ENCODE measurements at regions of chr10 and their contacts with region 1.

Region 1: GRCh38 chr10:86688398-86688921 is 20.1 kb downstream of the LDB3 start:
- DNase-seq: peak; percentile 54
- ATAC-seq: peak; percentile 89
- H3K4me3 ChIP-seq: no peak overlapping the region
- H3K27ac ChIP-seq: no peak overlapping the region
- H3K4me1 ChIP-seq: no peaks in the 10 kb centered on the region
- H3K27me3 ChIP-seq: no peaks in the 10 kb centered on the region
- CTCF ChIP-seq: peak; percentile 80 to 86 (median 81); a peak in 5 of 6 replicates
- POLR2A ChIP-seq: no peak
- RAD21 ChIP-seq: peak; percentile 91

Region 2: GRCh38 chr10:86399879-86400704 is 288.4 kb before region 1 on chr10:
- CTCF ChIA-PET with region 1: interaction called, 3 read pairs
- POLR2A ChIA-PET with region 1: no interaction called
- RAD21 ChIA-PET with region 1: no interaction called
- intact Hi-C with region 1: loop called (anchors 5 kb)
- DNase-seq: peak; percentile 91
- ATAC-seq: peak; percentile 90
- H3K4me3 ChIP-seq: peak overlapping the region; percentile 64 to 73
- H3K27ac ChIP-seq: peak overlapping the region; percentile 85
- H3K4me1 ChIP-seq: peaks cover 15 to 31% of the 10 kb centered on the region in 2 experiments
- H3K27me3 ChIP-seq: no peaks in the 10 kb centered on the region
- CTCF ChIP-seq: peak; percentile 90 to 91 (median 91)
- POLR2A ChIP-seq: peak; percentile 46
- RAD21 ChIP-seq: peak; percentile 97

Region 3: DNA sequence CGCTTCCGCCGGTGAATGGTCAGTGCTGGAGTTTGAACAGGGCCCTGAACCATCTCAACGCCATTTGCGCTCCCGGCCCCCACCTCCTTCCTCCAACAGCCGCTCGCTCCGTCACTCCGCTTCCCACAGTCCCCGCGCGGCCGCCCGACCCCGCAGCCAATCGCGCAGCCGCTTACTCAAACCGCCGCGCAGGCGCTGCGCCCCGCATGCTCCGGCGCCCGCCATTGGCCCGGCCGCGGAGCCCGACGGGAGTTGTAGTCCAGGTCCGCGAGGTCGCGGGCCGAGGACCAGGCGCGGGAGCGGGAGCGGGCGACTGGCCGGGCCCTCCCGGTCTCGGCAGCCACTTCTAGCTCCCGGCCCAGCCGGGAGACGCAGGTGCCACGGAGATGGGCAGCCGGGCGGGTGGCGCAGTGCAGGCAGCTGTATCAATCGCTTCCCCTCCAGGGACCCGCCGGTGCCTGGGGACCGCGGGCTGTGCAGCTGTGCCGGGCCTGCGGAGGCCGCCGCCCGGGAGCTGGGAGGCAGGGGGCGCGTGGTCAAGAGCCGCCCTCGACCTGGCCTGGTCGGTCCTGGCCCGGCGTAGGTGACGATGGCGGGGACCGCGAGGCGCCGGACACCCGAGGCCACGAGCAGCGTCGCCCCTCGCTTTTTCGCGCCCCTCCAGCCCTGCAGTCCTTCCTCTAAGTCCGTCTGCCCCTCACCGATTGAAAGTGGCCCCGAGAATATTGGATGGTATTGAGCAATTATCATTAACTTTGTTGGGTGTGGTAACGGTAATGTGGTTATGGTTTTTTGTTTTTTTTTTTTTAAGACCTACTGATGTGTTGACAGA is 166.6 kb before region 1 on chr10 and contains the start of gene WAPL:
- CTCF ChIA-PET with region 1: interaction called, 7 read pairs
- POLR2A ChIA-PET with region 1: no interaction called
- RAD21 ChIA-PET with region 1: no interaction called
- intact Hi-C with region 1: loop called (anchors 5 kb)
- DNase-seq: peak; percentile 81
- ATAC-seq: peak; percentile 93
- H3K4me3 ChIP-seq: peak within 1 kb of the TSS; percentile 82 to 84
- H3K27ac ChIP-seq: peak within 1 kb of the TSS; percentile 85
- H3K4me1 ChIP-seq: peaks cover 12 to 22% of the 10 kb centered on the region in 2 experiments; a peak in 3 of 4 replicates
- H3K27me3 ChIP-seq: no peaks in the 10 kb centered on the region
- CTCF ChIP-seq: no peak
- POLR2A ChIP-seq: peak; percentile 39
- RAD21 ChIP-seq: no peak
- total RNA-seq, gene WAPL: 37.5 TPM

Region 4: GRCh38 chr10:86592413-86592812 is 96.0 kb before region 1 on chr10:
- CTCF ChIA-PET with region 1: interaction called, 9 read pairs
- POLR2A ChIA-PET with region 1: no interaction called
- RAD21 ChIA-PET with region 1: no interaction called
- intact Hi-C with region 1: loop called (anchors 2 kb)
- DNase-seq: no peak
- ATAC-seq: peak; percentile 84
- H3K4me3 ChIP-seq: no peak overlapping the region
- H3K27ac ChIP-seq: no peak overlapping the region
- H3K4me1 ChIP-seq: peaks cover 0 to 12% of the 10 kb centered on the region in 2 experiments; a peak in 1 of 4 replicates
- H3K27me3 ChIP-seq: no peaks in the 10 kb centered on the region
- CTCF ChIP-seq: peak; percentile 34 to 44 (median 43); a peak in 5 of 6 replicates
- POLR2A ChIP-seq: no peak
- RAD21 ChIP-seq: peak; percentile 79

Region 5: GRCh38 chr10:86716466-86716865 is 28.0 kb after region 1 on chr10:
- CTCF ChIA-PET with region 1: no interaction called
- POLR2A ChIA-PET with region 1: no interaction called
- RAD21 ChIA-PET with region 1: no interaction called
- intact Hi-C with region 1: no loop called
- DNase-seq: no peak
- ATAC-seq: no peak
- H3K4me3 ChIP-seq: no peak overlapping the region
- H3K27ac ChIP-seq: no peak overlapping the region
- H3K4me1 ChIP-seq: peaks cover 5 to 9% of the 10 kb centered on the region in 2 experiments; a peak in 3 of 4 replicates
- H3K27me3 ChIP-seq: no peaks in the 10 kb centered on the region
- CTCF ChIP-seq: no peak
- POLR2A ChIP-seq: no peak
- RAD21 ChIP-seq: no peak

Region 6: DNA sequence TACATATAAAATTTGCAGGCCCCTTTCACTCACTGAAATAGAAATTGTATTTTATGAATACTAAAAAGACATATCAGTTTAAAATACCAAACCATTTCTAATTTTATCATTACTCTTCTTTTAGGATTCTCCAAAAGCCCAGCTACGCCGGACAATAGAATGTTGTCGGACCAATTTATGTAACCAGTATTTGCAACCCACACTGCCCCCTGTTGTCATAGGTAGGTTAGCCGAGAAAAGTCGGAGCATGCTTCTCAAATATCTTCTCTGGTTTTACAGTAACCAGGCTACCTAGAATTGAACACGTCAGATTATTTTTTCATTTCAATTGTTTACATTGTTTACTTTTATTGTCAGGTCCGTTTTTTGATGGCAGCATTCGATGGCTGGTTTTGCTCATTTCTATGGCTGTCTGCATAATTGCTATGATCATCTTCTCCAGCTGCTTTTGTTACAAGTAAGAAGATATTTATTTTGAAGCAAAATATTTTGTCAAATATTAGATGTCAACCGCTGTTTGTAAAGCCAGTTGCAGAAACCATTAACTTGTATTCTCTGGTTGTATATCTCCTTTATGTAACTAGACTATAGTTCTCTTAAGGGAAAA is 211.3 kb after region 1 on chr10:
- CTCF ChIA-PET with region 1: interaction called, 9 read pairs
- POLR2A ChIA-PET with region 1: no interaction called
- RAD21 ChIA-PET with region 1: no interaction called
- intact Hi-C with region 1: loop called (anchors 1 kb)
- DNase-seq: peak; percentile 39
- ATAC-seq: peak; percentile 81
- H3K4me3 ChIP-seq: no peak overlapping the region
- H3K27ac ChIP-seq: no peak overlapping the region
- H3K4me1 ChIP-seq: no peaks in the 10 kb centered on the region
- H3K27me3 ChIP-seq: no peaks in the 10 kb centered on the region
- CTCF ChIP-seq: peak; percentile 66 to 85 (median 71)
- POLR2A ChIP-seq: no peak
- RAD21 ChIP-seq: peak; percentile 79

Region 7: DNA sequence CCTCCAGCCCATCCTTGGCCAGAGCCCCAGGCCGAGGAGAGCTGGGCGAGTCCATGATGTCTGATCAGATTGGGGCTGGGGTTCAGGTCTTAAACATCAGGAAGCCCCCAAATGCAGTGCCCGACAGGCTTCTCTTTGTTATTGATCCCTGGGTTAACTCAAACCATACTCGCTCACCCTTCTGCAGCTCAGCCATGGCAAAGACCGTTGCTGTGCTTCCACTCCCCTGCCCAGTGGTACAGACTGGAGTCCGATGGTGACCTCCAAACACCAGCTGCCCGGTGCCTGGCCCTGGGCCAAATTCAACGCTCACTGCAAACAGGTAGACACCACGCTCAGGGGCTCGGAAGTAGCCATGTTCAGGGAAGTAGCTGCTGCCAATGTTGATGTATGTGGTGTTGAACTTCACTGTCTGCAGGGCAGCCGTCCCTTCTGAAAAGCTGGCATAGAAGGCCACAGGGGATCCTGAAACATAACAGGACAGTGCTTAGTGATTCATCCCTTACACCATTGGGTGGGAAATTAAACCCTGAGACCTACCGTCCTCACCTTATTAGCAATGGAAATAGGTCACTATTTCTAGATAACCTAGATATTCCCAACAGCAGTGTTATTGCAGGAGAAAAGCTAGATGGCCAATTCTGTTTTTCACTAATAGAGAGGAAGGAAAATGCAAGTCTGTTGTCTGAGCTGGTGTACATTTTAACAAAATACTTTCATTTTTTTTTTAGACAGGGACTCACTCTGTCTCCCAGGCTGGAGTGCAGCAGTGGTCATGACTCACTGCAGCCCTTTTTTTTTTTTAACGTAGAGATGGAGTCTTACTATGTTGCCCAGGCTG is 248.4 kb after region 1 on chr10:
- CTCF ChIA-PET with region 1: no interaction called
- POLR2A ChIA-PET with region 1: no interaction called
- RAD21 ChIA-PET with region 1: no interaction called
- intact Hi-C with region 1: loop called (anchors 1 kb)
- DNase-seq: no peak
- ATAC-seq: no peak
- H3K4me3 ChIP-seq: no peak overlapping the region
- H3K27ac ChIP-seq: no peak overlapping the region
- H3K4me1 ChIP-seq: peaks cover 0 to 10% of the 10 kb centered on the region in 2 experiments; a peak in 3 of 4 replicates
- H3K27me3 ChIP-seq: no peaks in the 10 kb centered on the region
- CTCF ChIP-seq: no peak
- POLR2A ChIP-seq: no peak
- RAD21 ChIP-seq: no peak

Region 8: DNA sequence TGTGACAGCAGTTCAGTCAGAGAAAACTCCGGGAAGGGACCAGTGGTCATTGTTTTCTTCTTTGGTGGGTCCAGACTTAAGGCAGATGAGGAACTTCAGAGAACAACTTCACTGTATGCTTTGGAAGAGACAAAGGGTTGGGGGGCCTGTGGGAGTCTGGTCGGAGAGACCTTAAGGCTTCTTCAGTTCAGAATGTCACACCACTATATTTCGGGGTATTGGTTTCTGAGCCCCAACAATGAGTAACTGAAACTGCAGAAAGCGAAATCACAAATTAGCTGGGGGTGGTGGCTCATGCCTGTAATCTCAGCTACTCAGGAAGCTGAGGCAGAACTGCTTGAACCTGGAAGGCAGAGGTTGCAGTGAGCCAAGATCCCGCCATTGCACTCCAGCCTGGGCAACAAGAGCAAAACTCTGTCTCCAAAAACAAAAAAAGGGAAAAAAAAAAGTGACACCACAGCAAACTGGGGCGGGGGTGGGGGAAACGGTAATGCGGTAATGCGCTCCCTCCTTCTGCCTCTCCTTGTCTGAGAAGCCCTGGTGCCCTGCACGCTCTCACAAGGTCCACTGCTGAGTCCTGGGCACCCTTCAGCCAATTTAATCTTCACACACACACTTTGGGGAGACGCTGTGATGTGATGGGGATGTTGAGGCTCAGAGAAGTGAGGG is 277.7 kb after region 1 on chr10:
- CTCF ChIA-PET with region 1: interaction called, 4 read pairs
- POLR2A ChIA-PET with region 1: interaction called, 4 read pairs
- RAD21 ChIA-PET with region 1: no interaction called
- intact Hi-C with region 1: loop called (anchors 1 kb)
- DNase-seq: no peak
- ATAC-seq: no peak
- H3K4me3 ChIP-seq: no peak overlapping the region; a peak in 1 of 4 replicates
- H3K27ac ChIP-seq: peak overlapping the region; percentile 95
- H3K4me1 ChIP-seq: peaks cover 47 to 82% of the 10 kb centered on the region in 2 experiments
- H3K27me3 ChIP-seq: no peaks in the 10 kb centered on the region
- CTCF ChIP-seq: no peak
- POLR2A ChIP-seq: no peak
- RAD21 ChIP-seq: no peak

Measured in HCT116 (cell line).